Motor neuron (in vitro differentiated cells): ENCODE measurements at regions of chr1 and their contacts with region 1.

Region 1: GRCh38 chr1:183915625-183916510 is 110.9 kb downstream of the RGL1 start:
- ATAC-seq: peak; percentile 75 to 99 (median 96)
- H3K4me3 ChIP-seq: no peak overlapping the region
- H3K27ac ChIP-seq: no peak overlapping the region
- H3K4me1 ChIP-seq: peaks cover 0 to 7% of the 10 kb centered on the region in 2 donors

Region 2: GRCh38 chr1:183635606-183636333 is 280.1 kb before region 1 on chr1 and contains the start of gene ARPC5:
- in situ Hi-C with region 1: loop called in 2 of 9 experiments (anchors 10 to 25 kb)
- ATAC-seq: peak; percentile 78 to 93 (median 90)
- H3K4me3 ChIP-seq: peak within 1 kb of the TSS; percentile 53 to 62 (median 60)
- H3K27ac ChIP-seq: peak within 1 kb of the TSS; percentile 64 to 72
- H3K4me1 ChIP-seq: peaks cover 4 to 18% of the 10 kb centered on the region in 2 donors
- total RNA-seq, gene ARPC5: 119 to 670 (median 172) TPM

Region 3: GRCh38 chr1:183646776-183647175 is 269.1 kb before region 1 on chr1:
- in situ Hi-C with region 1: loop called in 8 of 9 experiments (anchors 10 to 25 kb)
- ATAC-seq: no peak
- H3K4me3 ChIP-seq: no peak overlapping the region
- H3K27ac ChIP-seq: no peak overlapping the region
- H3K4me1 ChIP-seq: no peaks in the 10 kb centered on the region

Region 4: GRCh38 chr1:183655562-183656075 is 260.2 kb before region 1 on chr1:
- in situ Hi-C with region 1: loop called in 6 of 9 experiments (anchors 25 kb)
- ATAC-seq: peak; percentile 55 to 93 (median 84)
- H3K4me3 ChIP-seq: no peak overlapping the region
- H3K27ac ChIP-seq: no peak overlapping the region
- H3K4me1 ChIP-seq: no peaks in the 10 kb centered on the region

Region 5: DNA sequence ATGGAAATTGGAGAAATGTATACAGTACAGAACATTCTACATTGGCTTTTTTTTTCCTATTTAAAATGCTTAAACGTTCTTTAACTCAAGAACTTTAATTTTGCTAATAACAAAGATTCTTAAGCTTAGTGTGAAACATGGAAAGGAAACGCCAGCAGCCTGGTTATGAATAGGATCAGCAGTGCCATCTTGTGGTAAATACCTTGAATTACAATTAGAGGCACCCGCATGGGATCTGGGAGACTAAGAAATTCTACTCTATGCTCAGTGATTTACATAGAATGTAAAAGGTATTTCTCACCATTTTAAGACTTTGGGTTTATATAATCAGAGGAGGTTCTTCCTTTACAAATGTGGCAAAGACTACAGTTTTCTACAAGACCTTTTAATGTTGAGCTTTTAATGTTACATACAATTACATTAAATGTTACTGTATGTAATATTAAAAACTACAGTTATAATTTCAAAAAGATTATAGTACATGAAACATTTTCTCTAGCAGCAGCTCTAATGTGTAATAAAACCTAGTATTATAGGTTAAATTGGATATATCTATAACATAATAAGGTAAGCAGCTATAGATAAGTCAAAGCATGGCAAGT is 230.7 kb before region 1 on chr1:
- in situ Hi-C with region 1: loop called in 1 of 9 experiments (anchors 10 kb)
- ATAC-seq: peak in 4 of 8 experiments; percentile 39 to 78 (median 72)
- H3K4me3 ChIP-seq: no peak overlapping the region
- H3K27ac ChIP-seq: no peak overlapping the region
- H3K4me1 ChIP-seq: no peaks in the 10 kb centered on the region